CD8-positive, alpha-beta T cell (primary cell): ENCODE measurements at regions of chr17 and their contacts with region 1.

Region 1: DNA sequence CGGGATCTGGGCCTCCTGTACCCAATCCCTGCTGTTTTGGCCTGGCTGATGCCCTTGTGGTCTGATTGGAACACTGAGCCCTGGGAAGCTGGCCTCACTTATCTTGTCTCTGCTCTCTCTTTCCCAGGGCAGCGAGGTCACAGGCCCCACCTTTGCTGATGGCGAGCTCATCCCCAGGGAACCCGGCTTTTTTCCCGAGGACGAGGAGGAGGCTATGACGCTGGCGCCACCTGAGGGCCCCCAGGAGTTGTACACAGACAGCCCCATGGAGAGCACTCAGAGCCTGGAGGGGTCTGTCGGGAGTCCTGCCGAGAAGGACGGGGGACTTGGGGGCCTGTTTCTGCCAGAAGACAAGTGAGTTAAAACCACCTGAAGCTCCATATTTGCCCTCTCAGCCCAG is 126.0 kb downstream of the RAB11FIP4 start:
- DNase-seq: peak in 1 of 9 experiments; percentile 28
- ATAC-seq: no peak
- H3K4me3 ChIP-seq: no peak overlapping the region
- H3K4me3 Mint-ChIP-seq: no peak overlapping the region
- H3K27ac ChIP-seq: no peak overlapping the region
- H3K27ac Mint-ChIP-seq: no peak overlapping the region
- H3K4me1 ChIP-seq: peaks cover 23% of the 10 kb centered on the region
- H3K4me1 Mint-ChIP-seq: peaks cover 32% of the 10 kb centered on the region
- H3K27me3 ChIP-seq: no peaks in the 10 kb centered on the region
- H3K27me3 Mint-ChIP-seq: no peaks in the 10 kb centered on the region
- CTCF ChIP-seq: peak; percentile 16

Region 2: DNA sequence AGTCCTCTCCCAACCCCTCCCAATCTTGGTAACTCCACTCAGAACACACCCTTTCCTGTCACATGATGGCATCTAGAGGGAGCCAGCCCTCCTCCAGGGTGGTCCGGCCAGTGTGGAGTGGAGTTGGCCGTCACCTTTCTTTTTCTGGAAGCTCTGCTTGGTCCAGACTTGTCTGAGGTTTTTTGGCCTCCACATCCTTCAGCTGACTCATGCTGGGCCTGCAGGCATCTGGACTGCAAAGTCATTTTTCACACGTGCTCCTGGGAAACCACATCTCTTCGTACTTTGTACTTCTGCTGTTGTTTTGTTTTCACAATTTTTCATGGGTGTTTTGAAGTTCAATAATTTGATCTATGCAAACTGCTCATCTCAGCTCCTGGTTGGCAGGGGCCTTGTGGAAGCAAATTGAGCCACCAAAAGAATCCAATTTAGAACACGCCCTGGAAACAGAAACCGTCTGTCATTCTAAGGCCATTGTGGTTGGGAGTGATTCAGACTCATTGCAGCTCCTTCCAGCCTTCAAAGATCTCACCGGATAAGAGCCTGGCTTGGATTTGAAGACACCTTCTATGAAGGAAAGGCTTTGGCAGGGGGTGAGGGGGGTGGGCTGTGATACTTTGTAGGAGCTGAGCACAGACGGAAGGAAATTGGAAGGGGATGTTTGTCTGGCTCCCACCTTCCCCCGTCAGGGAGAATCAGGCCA is 465.2 kb before region 1 on chr17:
- CTCF ChIA-PET with region 1: no interaction called
- POLR2A ChIA-PET with region 1: no interaction called
- intact Hi-C with region 1: no loop called
- DNase-seq: peak in 2 of 9 experiments; percentile 33 to 47
- ATAC-seq: peak; percentile 20
- H3K4me3 ChIP-seq: no peak overlapping the region
- H3K4me3 Mint-ChIP-seq: no peak overlapping the region
- H3K27ac ChIP-seq: peak overlapping the region in 1 of 2 experiments; percentile 53
- H3K27ac Mint-ChIP-seq: no peak overlapping the region
- H3K4me1 ChIP-seq: no peaks in the 10 kb centered on the region
- H3K4me1 Mint-ChIP-seq: peaks cover 10% of the 10 kb centered on the region
- H3K27me3 ChIP-seq: no peaks in the 10 kb centered on the region
- H3K27me3 Mint-ChIP-seq: no peaks in the 10 kb centered on the region
- CTCF ChIP-seq: no peak

Region 3: DNA sequence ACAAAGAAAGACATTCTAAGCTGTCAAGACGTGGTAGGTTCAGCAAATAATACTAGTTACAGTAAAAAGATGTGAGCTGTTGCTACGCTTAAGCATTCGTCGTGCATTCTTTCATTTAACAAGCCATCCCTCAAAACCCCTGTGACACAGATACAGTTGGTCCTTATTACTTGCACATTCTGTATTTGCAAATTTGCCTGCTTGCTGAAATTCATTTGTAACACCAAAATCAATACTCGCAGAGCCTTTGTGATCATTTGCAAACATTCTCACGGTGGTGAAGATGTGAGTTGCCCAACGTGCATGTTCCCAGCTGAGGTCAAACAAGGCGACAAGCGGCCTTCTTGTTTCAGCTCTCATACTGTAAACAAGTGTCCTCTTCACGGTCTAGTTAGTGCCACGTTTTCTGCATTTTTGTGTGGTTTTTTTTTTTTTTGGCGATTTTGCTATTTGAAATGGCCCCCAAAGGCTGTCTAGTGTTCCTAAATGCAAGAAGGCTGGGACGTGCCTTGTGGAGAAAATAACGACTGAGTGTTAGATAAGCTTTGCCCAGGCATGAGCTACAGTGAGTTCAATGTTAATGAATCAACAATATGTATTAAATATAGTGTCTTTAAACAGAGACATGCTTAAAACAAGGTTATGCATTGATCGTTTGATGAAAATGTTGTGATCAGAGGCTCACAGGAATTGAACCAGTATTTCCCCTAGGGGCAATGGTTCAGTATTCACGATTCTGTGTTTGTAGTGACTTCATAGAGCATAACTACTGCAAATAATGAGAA is 42.0 kb before region 1 on chr17:
- CTCF ChIA-PET with region 1: no interaction called
- POLR2A ChIA-PET with region 1: no interaction called
- intact Hi-C with region 1: loop called (anchors 5 kb)
- DNase-seq: no peak
- ATAC-seq: no peak
- H3K4me3 ChIP-seq: no peak overlapping the region
- H3K4me3 Mint-ChIP-seq: no peak overlapping the region
- H3K27ac ChIP-seq: no peak overlapping the region
- H3K27ac Mint-ChIP-seq: no peak overlapping the region
- H3K4me1 ChIP-seq: peaks cover 1% of the 10 kb centered on the region
- H3K4me1 Mint-ChIP-seq: peaks cover 4% of the 10 kb centered on the region
- H3K27me3 ChIP-seq: no peaks in the 10 kb centered on the region
- H3K27me3 Mint-ChIP-seq: no peaks in the 10 kb centered on the region
- CTCF ChIP-seq: no peak

Region 4: DNA sequence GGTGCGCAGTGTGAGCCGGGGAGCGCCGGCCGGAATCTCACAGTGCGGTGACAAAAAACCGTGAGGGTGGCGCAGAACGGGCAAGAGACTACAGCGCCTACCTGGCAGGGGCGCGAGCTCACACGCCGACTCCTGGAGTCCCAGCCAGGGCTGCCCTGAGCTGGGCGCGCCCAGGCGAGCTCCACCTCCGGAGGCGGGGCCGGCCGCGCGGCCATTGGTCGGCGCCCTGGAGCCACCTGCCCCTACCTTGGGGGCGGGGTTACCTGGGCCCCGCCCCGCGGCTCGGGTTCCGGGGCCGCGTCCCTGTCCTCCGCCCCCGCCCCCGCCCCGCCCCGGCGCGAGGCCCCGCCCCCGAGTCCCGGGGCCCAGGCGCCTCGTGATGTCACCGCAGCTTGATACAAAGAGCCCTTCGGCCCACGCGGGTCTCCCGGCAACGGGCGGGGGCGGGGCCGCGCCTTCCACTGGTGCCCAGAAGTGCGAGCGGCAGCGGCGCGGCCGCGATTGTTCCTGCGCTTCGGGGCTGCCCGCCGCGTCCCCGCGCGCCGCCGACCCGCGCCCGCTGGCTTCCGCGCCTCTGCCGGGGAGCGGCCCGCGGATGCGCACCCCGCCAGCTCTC is 29.8 kb before region 1 on chr17:
- CTCF ChIA-PET with region 1: interaction called, 48 read pairs
- POLR2A ChIA-PET with region 1: interaction called, 172 read pairs
- intact Hi-C with region 1: loop called (anchors 5 kb)
- DNase-seq: peak; percentile 92 to 98 (median 96)
- ATAC-seq: peak; percentile 91
- H3K4me3 ChIP-seq: peak overlapping the region; percentile 80 to 83
- H3K4me3 Mint-ChIP-seq: peak overlapping the region; percentile 92
- H3K27ac ChIP-seq: peak overlapping the region; percentile 85 to 89
- H3K27ac Mint-ChIP-seq: peak overlapping the region; percentile 96
- H3K4me1 ChIP-seq: peaks cover 49% of the 10 kb centered on the region
- H3K4me1 Mint-ChIP-seq: peaks cover 50% of the 10 kb centered on the region
- H3K27me3 ChIP-seq: no peaks in the 10 kb centered on the region
- H3K27me3 Mint-ChIP-seq: no peaks in the 10 kb centered on the region
- CTCF ChIP-seq: no peak

Region 5: GRCh38 chr17:31738996-31739699 is 221.6 kb after region 1 on chr17:
- CTCF ChIA-PET with region 1: no interaction called
- POLR2A ChIA-PET with region 1: no interaction called
- intact Hi-C with region 1: no loop called
- DNase-seq: no peak
- ATAC-seq: no peak
- H3K4me3 ChIP-seq: no peak overlapping the region
- H3K4me3 Mint-ChIP-seq: no peak overlapping the region
- H3K27ac ChIP-seq: no peak overlapping the region
- H3K27ac Mint-ChIP-seq: no peak overlapping the region
- H3K4me1 ChIP-seq: no peaks in the 10 kb centered on the region
- H3K4me1 Mint-ChIP-seq: no peaks in the 10 kb centered on the region
- H3K27me3 ChIP-seq: no peaks in the 10 kb centered on the region
- H3K27me3 Mint-ChIP-seq: peaks cover 17% of the 10 kb centered on the region
- CTCF ChIP-seq: no peak